GM13977 (cell line): ENCODE measurements at regions of chr1 and their contacts with region 1.

Region 1: GRCh38 chr1:10507111-10507879 is 32.5 kb downstream of the PEX14 start:
- DNase-seq: peak; percentile 72
- CTCF ChIP-seq: peak; percentile 86

Region 2: GRCh38 chr1:9428601-9429341 is 1078.5 kb before region 1 on chr1:
- in situ Hi-C with region 1: no loop called
- DNase-seq: peak; percentile 95
- CTCF ChIP-seq: no peak

Region 3: DNA sequence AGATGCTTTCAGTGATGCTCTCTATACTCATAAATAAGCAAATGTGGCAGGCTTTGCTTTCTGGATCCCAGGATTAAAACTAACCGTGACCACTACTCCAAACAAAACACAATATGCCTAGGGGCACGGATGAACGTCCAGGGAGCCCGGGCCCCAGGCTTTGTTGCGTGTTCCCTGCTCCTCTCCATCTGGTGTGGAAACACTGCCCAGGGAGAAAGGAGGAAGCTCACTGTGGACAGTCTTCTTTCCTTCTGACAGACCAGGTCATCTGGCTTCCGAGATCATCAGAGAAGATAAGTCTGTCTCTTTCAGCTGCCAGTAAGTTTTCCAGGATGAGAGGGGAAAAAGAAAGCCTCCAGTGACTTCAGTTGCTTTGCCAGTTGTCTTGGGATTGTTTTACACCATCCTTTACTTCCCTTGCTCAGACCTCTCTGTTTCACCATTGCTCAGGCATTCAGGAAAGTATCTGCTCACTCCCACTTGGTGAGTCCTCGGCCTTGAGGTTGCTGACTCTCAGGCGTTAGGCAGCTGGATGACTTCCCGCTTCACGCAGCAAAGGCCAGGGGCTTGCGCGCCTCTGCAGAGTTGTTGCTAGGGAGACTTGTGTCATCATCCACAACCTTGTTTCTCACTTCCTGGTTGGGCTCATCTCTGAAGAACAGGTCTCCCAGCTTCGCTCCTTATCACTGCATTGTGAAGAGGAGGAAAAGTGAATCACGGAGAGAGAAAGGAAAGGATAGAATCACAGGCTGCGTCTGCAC is 129.0 kb before region 1 on chr1:
- in situ Hi-C with region 1: no loop called
- DNase-seq: no peak
- CTCF ChIP-seq: no peak

Region 4: DNA sequence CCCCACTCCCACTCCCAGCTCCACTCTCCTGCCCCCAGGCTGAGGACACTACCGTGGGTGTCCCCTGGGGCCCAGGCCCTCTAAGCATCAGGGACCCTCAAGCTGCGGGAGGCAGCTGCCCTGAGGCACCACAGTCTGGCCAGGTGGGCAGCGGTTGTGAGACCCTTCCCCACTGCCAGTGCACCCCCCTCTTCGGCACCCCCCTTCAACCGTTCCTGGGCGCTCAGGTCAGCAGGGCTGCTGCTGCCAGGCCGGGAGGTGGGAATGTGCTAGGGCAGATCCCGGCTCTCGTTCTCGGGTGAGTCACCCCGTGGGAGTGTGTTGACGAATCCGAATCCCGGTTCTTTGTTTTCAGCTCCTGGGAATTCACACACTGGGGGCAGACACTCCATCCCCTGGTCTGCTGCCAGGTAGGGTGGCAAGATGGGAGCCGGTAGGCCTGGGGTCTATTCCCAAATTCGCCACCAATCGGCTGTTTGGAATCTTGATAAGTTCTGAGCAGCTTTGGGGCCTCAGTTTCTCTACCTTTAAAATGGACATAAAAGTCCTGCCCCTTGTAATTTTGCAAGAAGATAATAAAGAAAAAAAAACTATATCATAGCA is 317.6 kb after region 1 on chr1:
- in situ Hi-C with region 1: no loop called
- DNase-seq: no peak
- CTCF ChIP-seq: no peak

Region 5: GRCh38 chr1:10941891-10942541 is 434.7 kb after region 1 on chr1:
- in situ Hi-C with region 1: loop called (anchors 25 kb)
- DNase-seq: peak; percentile 83
- CTCF ChIP-seq: peak; percentile 93

Region 6: DNA sequence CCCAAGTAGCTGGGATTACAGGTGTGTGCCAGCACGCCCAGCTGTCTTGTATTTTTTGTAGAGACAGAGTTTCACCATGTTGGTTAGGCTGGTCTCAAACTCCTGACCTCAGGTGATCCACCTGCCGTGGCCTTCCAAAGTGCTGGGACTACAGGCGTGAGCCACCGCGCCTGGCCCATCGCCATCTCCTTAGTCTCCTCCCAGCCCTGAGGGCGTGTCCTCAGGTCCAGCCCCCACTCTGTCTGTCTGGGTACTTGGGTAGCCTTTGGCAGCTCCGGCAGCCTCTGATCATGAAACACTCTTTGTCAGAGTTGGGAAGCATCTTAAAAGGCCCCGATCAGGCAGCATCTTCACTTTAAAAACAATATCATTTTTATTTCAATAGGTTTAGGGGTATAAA is 881.3 kb after region 1 on chr1:
- in situ Hi-C with region 1: no loop called
- DNase-seq: no peak
- CTCF ChIP-seq: no peak